Cardiac septum (tissue), 1 donor: ENCODE measurements at regions of chr10 and their contacts with region 1.

Region 1: GRCh38 chr10:93288654-93289634 is 193.2 kb downstream of the MYOF start:
- DNase-seq: no peak

Region 2: GRCh38 chr10:92880233-92880861 is 408.6 kb before region 1 on chr10:
- intact Hi-C with region 1: loop called (anchors 10 kb)
- DNase-seq: no peak

Region 3: DNA sequence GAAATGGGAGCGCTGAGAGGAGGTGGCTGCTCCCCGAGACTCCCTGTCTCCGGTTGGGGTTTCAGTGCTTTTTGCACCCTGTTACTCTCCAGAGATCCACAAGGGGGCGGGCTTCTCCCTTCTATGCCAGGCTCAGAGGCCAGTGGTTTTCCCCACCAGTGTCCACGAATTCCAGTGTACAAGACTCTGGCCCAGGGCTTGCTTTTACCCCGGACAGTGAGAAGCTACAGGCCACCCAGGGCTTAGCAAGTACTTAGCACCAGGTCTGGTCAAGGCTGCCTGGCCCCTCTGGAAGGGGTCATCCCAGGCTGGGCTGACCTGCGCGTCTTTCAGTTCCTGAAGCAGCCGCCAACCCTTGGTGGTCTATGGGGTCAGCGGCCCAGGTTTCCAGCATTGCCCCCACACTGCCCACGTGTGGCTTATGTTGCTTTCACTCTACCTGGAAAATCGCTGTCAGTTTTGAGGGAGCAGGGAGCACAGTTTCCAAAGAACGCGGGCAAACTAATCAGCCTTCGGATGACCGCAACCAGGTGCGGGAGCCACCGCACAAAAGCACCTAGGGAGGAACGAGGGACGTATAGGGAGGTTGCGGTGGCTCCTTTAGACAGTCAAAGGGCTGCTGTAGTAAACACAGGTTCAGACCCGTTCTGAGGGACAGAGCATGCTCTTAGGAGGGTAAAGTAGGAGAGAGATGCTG is 208.4 kb before region 1 on chr10:
- intact Hi-C with region 1: loop called (anchors 5 kb)
- DNase-seq: peak; percentile 80

Region 4: GRCh38 chr10:93115661-93116383 is 173.1 kb before region 1 on chr10:
- intact Hi-C with region 1: loop called (anchors 2 kb)
- DNase-seq: peak; percentile 79

Region 5: DNA sequence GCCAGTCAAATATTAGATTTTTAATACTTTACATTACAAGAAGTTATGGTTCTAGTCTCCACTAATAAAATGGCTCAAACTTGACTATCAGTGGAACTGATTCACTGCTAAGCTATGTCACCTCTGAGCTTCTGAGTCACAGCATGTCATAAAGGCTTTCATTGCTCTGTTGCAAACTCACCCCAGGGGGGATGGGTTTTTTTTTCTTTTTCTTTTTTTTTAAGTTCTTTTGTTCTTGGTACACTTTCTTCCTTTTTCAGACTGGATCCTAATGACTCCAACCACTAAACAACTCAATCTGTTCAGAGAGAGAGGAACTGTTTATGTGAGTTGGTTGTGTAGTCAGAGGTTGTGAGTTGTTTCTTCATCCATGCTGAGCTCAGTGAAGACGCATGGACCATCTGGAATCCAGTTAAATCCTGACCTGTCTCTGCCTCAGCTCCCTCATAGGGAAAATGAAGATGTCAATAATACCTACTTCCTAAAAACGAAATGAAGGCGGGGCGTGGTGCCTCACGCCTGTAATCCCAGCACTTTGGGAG is 182.2 kb after region 1 on chr10:
- intact Hi-C with region 1: no loop called
- DNase-seq: no peak

Region 6: GRCh38 chr10:93821051-93821772 is 532.3 kb after region 1 on chr10:
- intact Hi-C with region 1: no loop called
- DNase-seq: no peak